Activated CD4-positive, alpha-beta memory T cell treated with anti-CD3 and anti-CD28 coated beads for 36 hours (primary cell): ENCODE measurements at regions of chr7 and their contacts with region 1.

Region 1: GRCh38 chr7:23347682-23348180 is 48.6 kb downstream of the MALSU1 start:
- DNase-seq: no peak
- H3K4me3 Mint-ChIP-seq: no peak overlapping the region
- H3K27ac Mint-ChIP-seq: no peak overlapping the region
- H3K4me1 Mint-ChIP-seq: peaks cover 27% of the 10 kb centered on the region
- H3K27me3 Mint-ChIP-seq: peaks cover 3% of the 10 kb centered on the region

Region 2: GRCh38 chr7:23205909-23206767 is 141.6 kb before region 1 on chr7:
- CTCF ChIA-PET with region 1: no interaction called
- POLR2A ChIA-PET with region 1: no interaction called
- intact Hi-C with region 1: no loop called
- DNase-seq: no peak
- H3K4me3 Mint-ChIP-seq: no peak overlapping the region
- H3K27ac Mint-ChIP-seq: no peak overlapping the region
- H3K4me1 Mint-ChIP-seq: peaks cover 4% of the 10 kb centered on the region
- H3K27me3 Mint-ChIP-seq: peaks cover 16% of the 10 kb centered on the region

Region 3: GRCh38 chr7:23306936-23307521 is 40.7 kb before region 1 on chr7:
- CTCF ChIA-PET with region 1: no interaction called
- POLR2A ChIA-PET with region 1: no interaction called
- intact Hi-C with region 1: loop called (anchors 2 kb)
- DNase-seq: no peak
- H3K4me3 Mint-ChIP-seq: no peak overlapping the region
- H3K27ac Mint-ChIP-seq: peak overlapping the region; percentile 55
- H3K4me1 Mint-ChIP-seq: peaks cover 45% of the 10 kb centered on the region
- H3K27me3 Mint-ChIP-seq: no peaks in the 10 kb centered on the region